B cell (primary cell): ENCODE measurements at regions of chr5 and their contacts with region 1.

Region 1: GRCh38 chr5:78636682-78637081 is 11.9 kb downstream of the LHFPL2 start:
- DNase-seq: no peak
- ATAC-seq: no peak
- H3K4me3 ChIP-seq: no peak overlapping the region
- H3K4me3 Mint-ChIP-seq: no peak overlapping the region
- H3K27ac ChIP-seq: no peak overlapping the region
- H3K27ac Mint-ChIP-seq: no peak overlapping the region
- H3K4me1 ChIP-seq: peaks cover 20 to 31% of the 10 kb centered on the region in 2 donors
- H3K4me1 Mint-ChIP-seq: peaks cover 32% of the 10 kb centered on the region
- H3K27me3 ChIP-seq: no peaks in the 10 kb centered on the region
- H3K27me3 Mint-ChIP-seq: no peaks in the 10 kb centered on the region
- CTCF ChIP-seq: no peak

Region 2: GRCh38 chr5:78727786-78728761 is 91.4 kb after region 1 on chr5:
- CTCF ChIA-PET with region 1: no interaction called
- POLR2A ChIA-PET with region 1: interaction called, 10 read pairs
- intact Hi-C with region 1: no loop called
- DNase-seq: peak; percentile 88
- ATAC-seq: peak; percentile 84
- H3K4me3 ChIP-seq: peak overlapping the region in 3 of 5 experiments; percentile 16 to 30 (median 25)
- H3K4me3 Mint-ChIP-seq: peak overlapping the region; percentile 79
- H3K27ac ChIP-seq: peak overlapping the region; percentile 85 to 89
- H3K27ac Mint-ChIP-seq: peak overlapping the region; percentile 99
- H3K4me1 ChIP-seq: peaks cover 60 to 68% of the 10 kb centered on the region in 2 donors
- H3K4me1 Mint-ChIP-seq: peaks cover 67% of the 10 kb centered on the region
- H3K27me3 ChIP-seq: no peaks in the 10 kb centered on the region
- H3K27me3 Mint-ChIP-seq: no peaks in the 10 kb centered on the region
- CTCF ChIP-seq: no peak